Activated B cell treated with CpG ODN at 0.5 μM for 24 hours (primary cell): ENCODE measurements at regions of chr7 and their contacts with region 1.

Region 1: GRCh38 chr7:108525985-108526767 is at the start of gene PNPLA8:
- DNase-seq: peak; percentile 100
- ATAC-seq: peak; percentile 90
- H3K4me3 Mint-ChIP-seq: peak within 1 kb of the TSS; percentile 96
- H3K27ac Mint-ChIP-seq: peak within 1 kb of the TSS; percentile 97
- H3K4me1 Mint-ChIP-seq: peaks cover 53% of the 10 kb centered on the region
- H3K27me3 Mint-ChIP-seq: no peaks in the 10 kb centered on the region
- CTCF ChIP-seq: no peak
- total RNA-seq, gene PNPLA8: 20.9 and 25.5 TPM in 2 replicates

Region 2: DNA sequence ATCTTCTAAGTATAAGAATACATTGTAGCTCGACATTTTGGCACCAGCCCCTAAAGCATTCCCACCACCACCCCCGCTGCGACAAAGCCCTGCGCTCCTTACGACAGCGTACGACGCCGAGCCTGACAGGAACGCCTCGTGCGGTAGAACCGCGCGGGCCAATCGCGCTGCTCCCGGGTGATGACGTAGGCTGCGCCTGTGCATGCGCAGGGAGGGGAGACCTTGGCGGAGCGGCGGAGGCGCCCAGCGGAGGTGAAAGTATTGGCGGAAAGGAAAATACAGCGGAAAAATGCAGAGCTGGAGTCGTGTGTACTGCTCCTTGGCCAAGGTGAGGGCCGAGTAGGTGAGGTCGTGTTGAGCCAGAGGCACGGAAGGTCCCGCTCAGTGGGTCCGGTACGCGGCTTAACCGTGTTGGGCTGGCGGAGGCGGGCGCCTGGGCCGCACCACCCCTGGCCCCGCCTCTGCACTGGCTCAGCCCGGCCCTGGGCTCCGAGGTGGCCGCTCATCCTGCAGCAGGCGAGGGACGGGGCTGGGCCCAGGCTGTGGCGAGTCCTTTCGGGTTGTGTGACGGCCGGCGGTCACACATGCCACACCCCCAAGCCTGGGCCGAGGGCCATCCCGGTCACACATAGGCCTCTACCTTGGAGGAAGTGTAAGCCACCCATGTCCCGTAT is 635.1 kb before region 1 on chr7 and contains the start of gene DLD:
- CTCF ChIA-PET with region 1: no interaction called
- POLR2A ChIA-PET with region 1: no interaction called
- intact Hi-C with region 1: loop called (anchors 10 kb)
- DNase-seq: peak; percentile 89
- ATAC-seq: peak; percentile 97
- H3K4me3 Mint-ChIP-seq: peak within 1 kb of the TSS; percentile 98
- H3K27ac Mint-ChIP-seq: peak within 1 kb of the TSS; percentile 96
- H3K4me1 Mint-ChIP-seq: peaks cover 45% of the 10 kb centered on the region
- H3K27me3 Mint-ChIP-seq: no peaks in the 10 kb centered on the region
- CTCF ChIP-seq: no peak
- total RNA-seq, gene DLD: 55.0 and 66.1 TPM in 2 replicates

Region 3: DNA sequence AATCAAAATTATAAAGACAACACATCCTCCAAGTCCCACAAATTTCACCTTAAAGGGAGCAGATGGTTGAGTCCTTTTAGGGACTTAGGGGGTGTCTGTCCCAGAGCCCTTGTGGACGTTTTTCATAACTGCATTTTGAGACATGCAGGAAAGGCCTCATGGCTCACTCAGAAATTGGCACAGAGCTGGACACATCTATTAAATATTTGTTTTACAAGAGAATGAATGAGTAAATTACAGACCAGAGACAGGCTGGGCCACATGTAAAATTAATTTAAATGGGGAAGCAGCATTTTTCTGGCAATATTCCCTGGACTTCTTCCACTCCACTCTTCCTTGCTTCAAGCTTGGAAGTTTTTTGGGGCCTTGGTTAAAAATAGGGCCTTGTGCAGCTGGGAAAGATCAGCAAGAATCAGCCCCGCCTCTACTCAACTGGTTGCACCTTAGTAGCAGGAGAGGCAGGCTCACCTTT is 543.2 kb before region 1 on chr7:
- CTCF ChIA-PET with region 1: no interaction called
- POLR2A ChIA-PET with region 1: no interaction called
- intact Hi-C with region 1: no loop called
- DNase-seq: no peak
- ATAC-seq: no peak
- H3K4me3 Mint-ChIP-seq: no peak overlapping the region
- H3K27ac Mint-ChIP-seq: no peak overlapping the region
- H3K4me1 Mint-ChIP-seq: no peaks in the 10 kb centered on the region
- H3K27me3 Mint-ChIP-seq: peaks cover 7% of the 10 kb centered on the region
- CTCF ChIP-seq: no peak

Region 4: GRCh38 chr7:108503112-108504026 is 22.8 kb before region 1 on chr7:
- CTCF ChIA-PET with region 1: interaction called, 6 read pairs
- POLR2A ChIA-PET with region 1: interaction called, 68 read pairs
- intact Hi-C with region 1: loop called (anchors 1 kb)
- DNase-seq: no peak
- ATAC-seq: peak; percentile 95
- H3K4me3 Mint-ChIP-seq: peak overlapping the region; percentile 74
- H3K27ac Mint-ChIP-seq: peak overlapping the region; percentile 100
- H3K4me1 Mint-ChIP-seq: peaks cover 51% of the 10 kb centered on the region
- H3K27me3 Mint-ChIP-seq: no peaks in the 10 kb centered on the region
- CTCF ChIP-seq: no peak

Region 5: GRCh38 chr7:108511939-108512338 is 14.2 kb before region 1 on chr7:
- CTCF ChIA-PET with region 1: no interaction called
- POLR2A ChIA-PET with region 1: interaction called, 14 read pairs
- intact Hi-C with region 1: no loop called
- DNase-seq: no peak
- ATAC-seq: peak; percentile 31
- H3K4me3 Mint-ChIP-seq: peak overlapping the region; percentile 2
- H3K27ac Mint-ChIP-seq: peak overlapping the region; percentile 66
- H3K4me1 Mint-ChIP-seq: peaks cover 48% of the 10 kb centered on the region
- H3K27me3 Mint-ChIP-seq: no peaks in the 10 kb centered on the region
- CTCF ChIP-seq: no peak

Region 6: GRCh38 chr7:108559253-108559652 is 33.1 kb after region 1 on chr7:
- CTCF ChIA-PET with region 1: no interaction called
- POLR2A ChIA-PET with region 1: interaction called, 50 read pairs
- intact Hi-C with region 1: no loop called
- DNase-seq: no peak
- ATAC-seq: no peak
- H3K4me3 Mint-ChIP-seq: no peak overlapping the region
- H3K27ac Mint-ChIP-seq: no peak overlapping the region
- H3K4me1 Mint-ChIP-seq: peaks cover 33% of the 10 kb centered on the region
- H3K27me3 Mint-ChIP-seq: no peaks in the 10 kb centered on the region
- CTCF ChIP-seq: no peak

Region 7: DNA sequence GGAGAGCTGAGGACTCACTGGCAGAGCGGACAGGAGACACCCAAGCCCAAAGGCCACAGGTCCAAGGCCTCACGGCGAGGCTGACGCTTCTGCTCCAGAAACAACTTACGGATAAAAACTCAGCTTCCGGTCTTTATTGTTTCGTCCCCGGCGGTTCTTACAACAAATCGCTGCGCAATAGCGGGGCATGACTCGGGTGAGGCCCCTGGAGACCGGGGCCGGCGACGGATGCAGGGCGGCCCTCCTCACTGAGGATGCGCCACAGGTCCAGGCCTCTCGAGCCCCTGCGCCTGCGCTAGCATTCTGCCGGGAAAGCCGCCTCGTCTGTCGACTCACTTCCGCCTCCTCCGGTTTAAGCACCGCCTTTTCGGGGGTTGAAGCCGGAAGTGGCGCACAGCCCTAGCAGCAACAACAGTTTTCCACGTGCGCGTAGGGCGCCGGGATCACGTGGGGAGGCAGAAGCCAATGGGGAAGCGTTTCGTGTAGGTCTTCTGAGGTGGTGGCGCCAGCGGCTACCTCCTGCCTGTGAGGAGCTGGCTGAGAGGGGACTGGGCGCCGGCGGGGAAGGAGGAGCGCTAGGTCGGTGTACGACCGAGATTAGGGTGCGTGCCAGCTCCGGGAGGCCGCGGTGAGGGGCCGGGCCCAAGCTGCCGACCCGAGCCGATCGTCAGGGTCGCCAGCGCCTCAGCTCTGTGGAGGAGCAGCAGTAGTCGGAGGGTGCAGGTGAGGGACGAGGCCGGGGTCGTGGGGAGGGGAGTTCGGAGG is 43.4 kb after region 1 on chr7 and contains the starts of genes DNAJB9 and THAP5:
- CTCF ChIA-PET with region 1: interaction called, 12 read pairs
- POLR2A ChIA-PET with region 1: interaction called, 125 read pairs
- intact Hi-C with region 1: loop called (anchors 1 kb)
- DNase-seq: peak; percentile 97
- ATAC-seq: peak; percentile 89
- H3K4me3 Mint-ChIP-seq: peak within 1 kb of the TSS; percentile 98
- H3K27ac Mint-ChIP-seq: peak within 1 kb of the TSS; percentile 99
- H3K4me1 Mint-ChIP-seq: peaks cover 66% of the 10 kb centered on the region
- H3K27me3 Mint-ChIP-seq: no peaks in the 10 kb centered on the region
- CTCF ChIP-seq: no peak
- total RNA-seq, gene DNAJB9: 9.0 and 9.9 TPM in 2 replicates
- total RNA-seq, gene THAP5: 22.1 and 26.3 TPM in 2 replicates

Region 8: DNA sequence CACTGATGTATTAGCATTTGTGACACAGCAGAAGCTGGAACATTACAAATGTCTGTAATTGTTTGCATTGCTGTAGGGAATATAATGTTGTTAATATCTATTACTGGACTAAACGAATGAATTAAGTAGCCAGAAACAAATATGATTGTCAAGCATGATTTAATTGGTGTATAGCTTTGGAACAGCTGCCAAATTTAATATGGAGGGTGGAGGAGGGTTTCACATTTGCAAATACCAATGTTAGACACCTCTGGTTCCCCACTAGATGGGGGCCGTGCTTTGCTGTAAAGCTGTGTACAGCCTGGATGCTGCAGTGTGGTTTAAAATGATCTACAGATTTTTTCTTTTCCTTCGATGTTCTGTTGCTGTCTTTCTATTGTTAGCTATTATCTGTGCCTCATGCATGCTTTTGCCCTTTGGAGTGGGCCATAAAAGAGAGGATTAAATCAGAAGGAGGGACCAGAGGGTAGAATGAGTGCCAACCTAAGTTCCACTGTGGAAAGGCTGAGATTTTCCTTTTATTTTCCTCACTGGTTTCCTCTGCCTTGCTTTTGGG is 66.5 kb after region 1 on chr7:
- CTCF ChIA-PET with region 1: no interaction called
- POLR2A ChIA-PET with region 1: no interaction called
- intact Hi-C with region 1: no loop called
- DNase-seq: no peak
- ATAC-seq: no peak
- H3K4me3 Mint-ChIP-seq: no peak overlapping the region
- H3K27ac Mint-ChIP-seq: no peak overlapping the region
- H3K4me1 Mint-ChIP-seq: no peaks in the 10 kb centered on the region
- H3K27me3 Mint-ChIP-seq: peaks cover 3% of the 10 kb centered on the region
- CTCF ChIP-seq: no peak

Region 9: GRCh38 chr7:109206196-109206595 is 680.0 kb after region 1 on chr7:
- CTCF ChIA-PET with region 1: no interaction called
- POLR2A ChIA-PET with region 1: no interaction called
- intact Hi-C with region 1: no loop called
- DNase-seq: no peak
- ATAC-seq: no peak
- H3K4me3 Mint-ChIP-seq: no peak overlapping the region
- H3K27ac Mint-ChIP-seq: no peak overlapping the region
- H3K4me1 Mint-ChIP-seq: no peaks in the 10 kb centered on the region
- H3K27me3 Mint-ChIP-seq: no peaks in the 10 kb centered on the region
- CTCF ChIP-seq: no peak

Region 10: GRCh38 chr7:109224100-109224499 is 697.9 kb after region 1 on chr7:
- CTCF ChIA-PET with region 1: no interaction called
- POLR2A ChIA-PET with region 1: no interaction called
- intact Hi-C with region 1: no loop called
- DNase-seq: no peak
- ATAC-seq: no peak
- H3K4me3 Mint-ChIP-seq: no peak overlapping the region
- H3K27ac Mint-ChIP-seq: no peak overlapping the region
- H3K4me1 Mint-ChIP-seq: no peaks in the 10 kb centered on the region
- H3K27me3 Mint-ChIP-seq: no peaks in the 10 kb centered on the region
- CTCF ChIP-seq: no peak